Vagina (tissue), 2 donors: ENCODE measurements at regions of chr4 and their contacts with region 1.

Region 1: GRCh38 chr4:182938205-182938645 is 21.0 kb upstream of the DCTD start:
- DNase-seq: peak in 1 of 2 donors; percentile 74
- H3K4me3 ChIP-seq: no peak overlapping the region
- H3K27ac ChIP-seq: no peak overlapping the region
- H3K4me1 ChIP-seq: no peaks in the 10 kb centered on the region
- H3K27me3 ChIP-seq: no peaks in the 10 kb centered on the region
- CTCF ChIP-seq: peak; percentile 35 to 84 (median 79)
- POLR2A ChIP-seq: no peak

Region 2: DNA sequence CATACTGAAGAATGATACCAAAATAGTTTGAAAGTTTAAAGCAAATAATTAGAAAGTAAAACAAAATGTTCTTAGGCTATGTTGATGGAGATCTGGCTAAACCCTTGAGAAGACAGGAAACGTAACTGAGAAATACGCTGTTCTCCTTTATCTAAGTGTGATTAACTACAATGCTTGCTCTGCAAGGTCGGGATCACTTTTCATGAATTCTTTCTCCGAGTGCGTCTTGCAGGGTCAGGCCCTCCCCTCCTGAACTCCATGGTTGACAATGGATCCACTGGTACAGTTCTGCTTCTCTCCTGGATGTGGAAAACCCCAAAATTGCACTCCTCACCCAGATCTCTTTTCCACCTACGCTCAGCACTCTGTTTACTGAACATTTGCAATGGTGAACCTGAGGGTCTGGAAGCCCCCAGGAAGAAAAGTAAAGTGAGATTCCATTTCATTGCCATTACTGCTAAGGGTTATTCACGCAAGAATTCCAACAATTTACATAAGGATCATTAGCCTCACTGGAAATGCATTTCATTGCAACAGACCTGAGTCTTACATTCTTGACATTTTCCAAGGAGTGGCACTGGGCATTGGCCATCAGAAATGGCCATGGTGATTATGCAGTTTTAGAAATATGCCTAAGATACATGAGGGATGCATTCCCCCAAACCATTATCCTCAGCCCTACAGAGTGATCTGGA is 136.2 kb after region 1 on chr4:
- intact Hi-C with region 1: loop called (anchors 10 kb)
- DNase-seq: no peak
- H3K4me3 ChIP-seq: no peak overlapping the region
- H3K27ac ChIP-seq: no peak overlapping the region
- H3K4me1 ChIP-seq: no peaks in the 10 kb centered on the region
- H3K27me3 ChIP-seq: no peaks in the 10 kb centered on the region
- CTCF ChIP-seq: no peak
- POLR2A ChIP-seq: no peak

Region 3: GRCh38 chr4:183261953-183262775 is 323.9 kb after region 1 on chr4:
- intact Hi-C with region 1: loop called (anchors 5 kb)
- DNase-seq: no peak
- H3K4me3 ChIP-seq: no peak overlapping the region
- H3K27ac ChIP-seq: peak overlapping the region; percentile 51
- H3K4me1 ChIP-seq: peaks cover 6% of the 10 kb centered on the region
- H3K27me3 ChIP-seq: no peaks in the 10 kb centered on the region
- CTCF ChIP-seq: peak; percentile 62 to 81 (median 77)
- POLR2A ChIP-seq: no peak